A549 (cell line): ENCODE measurements at regions of chr15 and their contacts with region 1.

Region 1: DNA sequence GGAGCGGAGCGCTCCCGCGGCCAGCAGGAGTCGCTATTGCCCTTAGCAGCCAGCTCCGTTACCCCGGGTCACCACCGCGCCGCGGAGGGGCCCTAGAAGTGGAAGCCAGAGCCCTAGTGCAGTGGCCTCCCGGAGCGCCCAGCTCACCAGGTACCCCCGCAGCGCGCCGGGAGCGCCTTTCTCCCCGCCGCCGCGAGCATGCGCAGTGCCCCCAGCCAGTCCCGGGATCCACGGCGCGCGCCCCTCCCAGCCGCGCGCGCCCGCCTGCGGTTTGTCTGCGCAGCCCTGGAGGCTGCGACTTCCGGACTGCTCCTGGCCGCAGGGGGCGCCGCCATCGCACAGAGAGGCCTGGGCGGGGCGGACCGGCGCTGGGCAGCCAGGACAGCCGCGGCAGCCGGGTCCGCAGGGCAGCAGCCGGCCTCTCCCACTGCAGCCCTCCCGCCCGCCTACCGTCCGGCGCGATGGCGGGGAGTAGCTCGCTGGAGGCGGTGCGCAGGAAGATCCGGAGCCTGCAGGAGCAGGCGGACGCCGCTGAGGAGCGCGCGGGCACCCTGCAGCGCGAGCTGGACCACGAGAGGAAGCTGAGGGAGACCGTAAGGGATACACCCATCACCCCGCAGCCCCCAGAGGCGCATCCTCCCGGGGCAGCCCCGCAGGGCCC is 5.7 kb downstream of the TPM1 start:
- DNase-seq: peak; percentile 96 to 98
- ATAC-seq: peak; percentile 69 to 76
- H3K4me3 ChIP-seq: peak overlapping the region; percentile 87
- H3K27ac ChIP-seq: peak overlapping the region; percentile 94 to 97
- H3K4me1 ChIP-seq: peaks cover 66% of the 10 kb centered on the region
- CTCF ChIP-seq: peak; percentile 98
- EP300 ChIP-seq: peak in 1 of 2 experiments; percentile 50; a peak in 1 of 5 replicates
- POLR2A ChIP-seq: peak; percentile 63
- RAD21 ChIP-seq: peak; percentile 75 to 94

Region 2: DNA sequence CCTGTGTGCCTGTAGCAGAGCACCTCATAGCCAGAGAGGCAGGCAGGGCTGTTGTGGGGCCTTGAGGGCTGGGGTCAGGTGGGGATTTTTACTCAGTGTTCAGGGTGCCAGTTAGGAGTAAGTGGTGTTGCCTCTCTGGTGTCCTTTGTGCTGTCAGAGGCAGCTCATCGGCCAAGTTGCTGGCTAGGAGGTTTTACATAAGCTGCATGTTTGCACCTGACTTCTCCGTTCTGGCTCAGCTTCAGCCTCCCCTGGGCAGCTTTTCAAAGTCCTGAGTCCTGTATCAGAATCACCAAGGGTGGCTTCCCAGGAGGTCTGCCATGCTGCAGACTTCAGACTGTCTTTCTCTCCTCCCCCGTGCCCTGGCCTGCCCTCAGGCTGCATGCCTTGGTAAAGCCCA is 248.3 kb before region 1 on chr15:
- CTCF ChIA-PET with region 1: interaction called, 25 read pairs
- POLR2A ChIA-PET with region 1: no interaction called
- DNase-seq: no peak
- ATAC-seq: no peak
- H3K4me3 ChIP-seq: no peak overlapping the region
- H3K27ac ChIP-seq: 0 out of 6 replicates have a peak overlapping the region, but pooled peaks of 1 of the 2 experiments have one; percentile 1
- H3K4me1 ChIP-seq: no peaks in the 10 kb centered on the region
- CTCF ChIP-seq: no peak
- EP300 ChIP-seq: no peak
- POLR2A ChIP-seq: no peak
- RAD21 ChIP-seq: no peak

Region 3: DNA sequence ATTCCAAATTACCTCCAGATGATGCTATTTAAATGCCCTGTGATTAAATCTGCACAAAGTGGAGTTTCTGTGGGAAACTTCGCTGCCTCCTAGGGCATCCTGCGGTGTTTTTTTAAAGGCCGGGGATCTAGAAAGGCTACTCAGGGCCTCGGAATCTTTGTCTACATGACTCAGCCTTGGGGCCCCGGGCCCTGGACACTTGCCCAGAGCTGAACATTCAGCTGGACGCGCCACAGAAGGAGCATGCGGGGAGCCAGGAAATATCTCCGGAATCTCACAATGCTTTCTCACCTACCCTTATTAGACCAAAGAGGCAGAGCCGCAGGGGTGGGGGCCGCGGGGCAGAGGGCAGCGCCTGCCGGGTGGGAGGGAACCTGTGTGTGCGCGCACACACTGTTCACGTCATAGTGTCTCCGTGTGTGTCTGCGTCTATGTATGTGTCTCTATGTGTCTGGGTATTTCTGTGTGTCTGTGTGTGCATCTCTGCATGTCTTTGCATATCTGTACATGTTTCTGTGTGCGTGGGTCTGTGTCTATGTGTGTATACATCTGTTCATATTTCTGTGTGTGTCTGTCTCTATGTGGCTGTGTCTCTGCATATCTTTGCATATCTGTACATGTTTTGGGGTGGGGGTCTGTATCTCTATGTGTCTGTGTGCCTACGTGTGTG is 151.1 kb before region 1 on chr15:
- CTCF ChIA-PET with region 1: interaction called, 76 read pairs
- POLR2A ChIA-PET with region 1: interaction called, 98 read pairs
- DNase-seq: peak; percentile 96 to 99
- ATAC-seq: peak; percentile 81 to 88
- H3K4me3 ChIP-seq: peak overlapping the region; percentile 10; the same call in 2 of the 3 replicates
- H3K27ac ChIP-seq: peak overlapping the region; percentile 98 to 99
- H3K4me1 ChIP-seq: peaks cover 72% of the 10 kb centered on the region
- CTCF ChIP-seq: no peak
- EP300 ChIP-seq: peak; percentile 94 to 97
- POLR2A ChIP-seq: no peak
- RAD21 ChIP-seq: peak; percentile 43 to 75

Region 4: GRCh38 chr15:62977952-62978811 is 70.1 kb before region 1 on chr15:
- CTCF ChIA-PET with region 1: interaction called, 21 read pairs
- POLR2A ChIA-PET with region 1: interaction called, 6 read pairs
- DNase-seq: peak in 1 of 2 experiments; percentile 61
- ATAC-seq: peak; percentile 48 to 58; a peak in 5 of 6 replicates
- H3K4me3 ChIP-seq: no peak overlapping the region
- H3K27ac ChIP-seq: peak overlapping the region; percentile 41 to 73
- H3K4me1 ChIP-seq: peaks cover 50% of the 10 kb centered on the region
- CTCF ChIP-seq: no peak
- EP300 ChIP-seq: no peak
- POLR2A ChIP-seq: no peak
- RAD21 ChIP-seq: no peak

Region 5: GRCh38 chr15:63093486-63094205 is 45.4 kb after region 1 on chr15:
- CTCF ChIA-PET with region 1: interaction called, 1,136 read pairs
- POLR2A ChIA-PET with region 1: interaction called, 37 read pairs
- DNase-seq: peak; percentile 81 to 91
- ATAC-seq: peak; percentile 70 to 76
- H3K4me3 ChIP-seq: no peak overlapping the region
- H3K27ac ChIP-seq: peak overlapping the region; percentile 91 to 93
- H3K4me1 ChIP-seq: peaks cover 78% of the 10 kb centered on the region
- CTCF ChIP-seq: peak; percentile 98
- EP300 ChIP-seq: no peak
- POLR2A ChIP-seq: no peak
- RAD21 ChIP-seq: peak; percentile 100

Region 6: GRCh38 chr15:63146669-63147068 is 98.4 kb after region 1 on chr15:
- CTCF ChIA-PET with region 1: interaction called, 17 read pairs
- POLR2A ChIA-PET with region 1: interaction called, 5 read pairs
- DNase-seq: peak in 1 of 2 experiments; percentile 41
- ATAC-seq: peak; percentile 51; a peak in 5 of 6 replicates
- H3K4me3 ChIP-seq: no peak overlapping the region
- H3K27ac ChIP-seq: peak overlapping the region in 1 of 2 experiments; percentile 40; a peak in 3 of 6 replicates
- H3K4me1 ChIP-seq: peaks cover 16% of the 10 kb centered on the region
- CTCF ChIP-seq: peak; percentile 34; the same call in 2 of the 3 replicates
- EP300 ChIP-seq: no peak
- POLR2A ChIP-seq: no peak
- RAD21 ChIP-seq: peak; percentile 48 to 50

Region 7: DNA sequence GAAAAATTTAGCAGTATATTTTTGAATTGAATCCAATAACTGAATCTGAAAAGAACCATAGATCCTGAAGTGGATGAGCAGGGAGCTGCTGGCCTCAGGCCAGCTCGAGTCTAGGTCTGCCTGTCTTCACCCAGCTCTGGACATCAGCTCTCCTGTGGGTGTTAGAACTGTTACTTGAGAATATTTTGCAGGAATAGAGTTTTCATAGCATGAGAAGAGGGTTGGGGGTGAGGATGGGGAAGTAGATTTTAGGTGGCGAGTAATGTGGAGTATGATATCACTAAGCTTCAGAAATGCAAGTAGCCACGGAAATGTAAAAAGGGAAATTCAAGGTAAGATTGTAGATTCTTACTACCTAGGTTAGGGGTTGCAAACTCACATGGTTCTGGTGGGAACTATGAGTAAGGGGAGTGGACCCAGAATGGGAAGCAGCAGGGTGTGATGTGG is 147.3 kb after region 1 on chr15:
- CTCF ChIA-PET with region 1: no interaction called
- POLR2A ChIA-PET with region 1: no interaction called
- DNase-seq: no peak
- ATAC-seq: no peak
- H3K4me3 ChIP-seq: no peak overlapping the region
- H3K27ac ChIP-seq: no peak overlapping the region
- H3K4me1 ChIP-seq: peaks cover 38% of the 10 kb centered on the region
- CTCF ChIP-seq: no peak
- EP300 ChIP-seq: no peak
- POLR2A ChIP-seq: no peak
- RAD21 ChIP-seq: no peak

Region 8: DNA sequence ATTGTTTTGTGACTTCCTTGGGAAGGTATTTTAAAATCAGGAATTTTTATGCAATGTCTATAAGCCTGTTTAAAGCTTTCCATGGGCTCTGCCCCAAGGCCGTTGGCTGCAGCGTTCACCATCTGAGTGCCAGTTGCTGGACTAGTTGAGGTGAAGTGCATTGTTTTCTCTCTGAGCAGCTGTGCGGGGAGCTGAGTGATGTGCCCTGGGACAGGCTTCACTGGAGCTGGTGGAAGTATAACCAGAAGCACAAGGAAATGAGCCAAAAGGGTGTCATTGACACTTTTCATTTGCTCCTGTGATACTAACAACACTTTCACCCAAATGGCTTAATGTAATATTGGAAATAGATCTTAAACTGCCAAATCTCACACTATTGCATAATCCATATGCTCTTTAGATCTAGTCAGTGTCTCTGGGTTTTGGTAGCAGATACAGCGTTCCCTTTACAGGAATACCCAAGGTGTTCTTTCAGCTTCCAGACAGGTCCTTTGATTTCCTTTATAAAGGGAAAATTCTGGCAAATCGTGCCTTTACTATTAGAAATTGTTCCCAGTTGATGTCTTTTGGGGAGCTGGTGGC is 258.3 kb after region 1 on chr15:
- CTCF ChIA-PET with region 1: no interaction called
- POLR2A ChIA-PET with region 1: no interaction called
- DNase-seq: no peak
- ATAC-seq: no peak
- H3K4me3 ChIP-seq: no peak overlapping the region
- H3K27ac ChIP-seq: no peak overlapping the region
- H3K4me1 ChIP-seq: no peaks in the 10 kb centered on the region
- CTCF ChIP-seq: no peak
- EP300 ChIP-seq: no peak
- POLR2A ChIP-seq: no peak
- RAD21 ChIP-seq: no peak